ENCODE measurements at regions of chr1 and their contacts with region 1.

Region 1: DNA sequence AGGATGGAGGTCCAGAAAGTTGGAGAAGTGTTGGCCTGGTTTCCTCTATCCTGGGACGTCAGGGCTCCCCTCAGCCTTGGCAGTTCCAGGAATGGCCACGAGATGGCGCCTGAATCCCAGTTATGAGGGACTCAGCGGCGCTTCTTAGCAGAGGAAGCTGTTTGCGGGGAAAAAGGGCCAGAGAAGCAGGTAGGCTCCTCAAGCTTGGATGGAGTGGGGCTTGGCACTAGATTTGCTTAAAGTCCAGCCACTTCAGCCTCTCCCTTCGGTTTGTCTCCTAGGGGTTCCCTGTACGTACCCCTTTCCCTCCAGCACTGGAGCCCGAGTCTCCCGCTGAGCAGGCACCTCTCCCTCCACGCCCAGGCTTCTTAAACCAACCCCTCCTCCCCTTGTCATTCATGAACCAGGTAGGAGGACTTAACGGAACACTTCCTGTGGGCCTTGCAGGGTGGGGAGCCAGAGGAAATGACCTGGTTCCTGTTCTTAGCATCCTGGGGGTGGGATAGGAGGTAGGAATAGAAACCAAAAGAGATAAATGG is 32.0 kb upstream of the TENT5B start:
- DNase-seq: peak; percentile 82
- H3K4me3 ChIP-seq: no peak overlapping the region; a peak in 1 of 4 replicates
- H3K27ac ChIP-seq: no peak overlapping the region
- H3K4me1 ChIP-seq: no peaks in the 10 kb centered on the region
- H3K27me3 ChIP-seq: no peaks in the 10 kb centered on the region
- CTCF ChIP-seq: peak; percentile 95
- EP300 ChIP-seq: no peak
- RAD21 ChIP-seq: peak; percentile 96

Region 2: DNA sequence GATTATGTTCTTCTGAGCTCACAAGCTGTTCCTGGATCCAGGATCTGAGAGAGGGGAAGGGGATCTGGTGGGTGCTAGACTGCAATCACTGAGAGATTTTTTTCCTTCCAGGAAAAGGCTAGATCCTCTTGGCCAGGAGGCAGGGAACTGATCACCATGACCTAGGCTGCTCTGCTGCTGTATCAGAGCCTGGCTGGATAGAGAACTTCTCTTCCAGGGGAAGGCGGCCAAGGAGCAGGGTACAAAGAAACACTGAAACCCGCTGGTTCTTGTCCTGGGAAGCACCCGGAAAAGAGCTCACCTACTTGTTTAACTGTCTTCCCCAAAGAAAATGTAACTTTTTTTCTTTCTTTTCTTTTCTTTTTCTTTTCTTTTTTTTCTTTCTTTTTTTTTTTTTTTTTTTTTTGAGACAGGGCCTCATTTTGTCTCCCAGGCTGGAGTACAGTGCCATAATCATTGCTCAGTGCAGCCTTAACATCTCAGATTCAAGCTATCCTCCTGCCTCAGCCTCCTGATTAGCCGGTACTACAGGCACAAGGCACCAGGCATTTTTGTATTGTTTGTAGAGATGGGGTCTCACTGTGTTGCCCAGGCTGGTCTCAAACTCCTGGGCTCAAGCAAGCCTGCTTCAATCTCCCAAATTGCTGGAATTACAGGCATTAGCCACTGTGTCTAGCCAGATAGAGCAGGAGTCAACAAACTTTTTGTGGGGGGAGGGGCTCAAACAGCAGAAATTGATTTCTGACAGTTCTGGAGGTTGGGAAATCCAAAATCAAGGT is 527.5 kb before region 1 on chr1:
- CTCF ChIA-PET with region 1: no interaction called
- POLR2A ChIA-PET with region 1: no interaction called
- DNase-seq: no peak
- H3K4me3 ChIP-seq: no peak overlapping the region
- H3K27ac ChIP-seq: no peak overlapping the region
- H3K4me1 ChIP-seq: no peaks in the 10 kb centered on the region
- H3K27me3 ChIP-seq: no peaks in the 10 kb centered on the region; the same call in 1 of the 2 replicates
- CTCF ChIP-seq: no peak
- EP300 ChIP-seq: no peak
- RAD21 ChIP-seq: no peak

Region 3: GRCh38 chr1:26761217-26761616 is 283.5 kb before region 1 on chr1:
- CTCF ChIA-PET with region 1: no interaction called
- POLR2A ChIA-PET with region 1: no interaction called
- DNase-seq: peak; percentile 31
- H3K4me3 ChIP-seq: no peak overlapping the region
- H3K27ac ChIP-seq: no peak overlapping the region
- H3K4me1 ChIP-seq: no peaks in the 10 kb centered on the region; a peak in 1 of 4 replicates
- H3K27me3 ChIP-seq: no peaks in the 10 kb centered on the region
- CTCF ChIP-seq: peak; percentile 34
- EP300 ChIP-seq: no peak
- RAD21 ChIP-seq: peak; percentile 33; the same call in 1 of the 2 replicates

Region 4: GRCh38 chr1:26961826-26962225 is 82.9 kb before region 1 on chr1:
- CTCF ChIA-PET with region 1: interaction called, 12 read pairs
- POLR2A ChIA-PET with region 1: no interaction called
- DNase-seq: no peak
- H3K4me3 ChIP-seq: no peak overlapping the region
- H3K27ac ChIP-seq: no peak overlapping the region
- H3K4me1 ChIP-seq: peaks cover 3 to 7% of the 10 kb centered on the region in 2 experiments; a peak in 1 of 4 replicates
- H3K27me3 ChIP-seq: peaks cover 41% of the 10 kb centered on the region
- CTCF ChIP-seq: no peak
- EP300 ChIP-seq: no peak
- RAD21 ChIP-seq: no peak

Region 5: DNA sequence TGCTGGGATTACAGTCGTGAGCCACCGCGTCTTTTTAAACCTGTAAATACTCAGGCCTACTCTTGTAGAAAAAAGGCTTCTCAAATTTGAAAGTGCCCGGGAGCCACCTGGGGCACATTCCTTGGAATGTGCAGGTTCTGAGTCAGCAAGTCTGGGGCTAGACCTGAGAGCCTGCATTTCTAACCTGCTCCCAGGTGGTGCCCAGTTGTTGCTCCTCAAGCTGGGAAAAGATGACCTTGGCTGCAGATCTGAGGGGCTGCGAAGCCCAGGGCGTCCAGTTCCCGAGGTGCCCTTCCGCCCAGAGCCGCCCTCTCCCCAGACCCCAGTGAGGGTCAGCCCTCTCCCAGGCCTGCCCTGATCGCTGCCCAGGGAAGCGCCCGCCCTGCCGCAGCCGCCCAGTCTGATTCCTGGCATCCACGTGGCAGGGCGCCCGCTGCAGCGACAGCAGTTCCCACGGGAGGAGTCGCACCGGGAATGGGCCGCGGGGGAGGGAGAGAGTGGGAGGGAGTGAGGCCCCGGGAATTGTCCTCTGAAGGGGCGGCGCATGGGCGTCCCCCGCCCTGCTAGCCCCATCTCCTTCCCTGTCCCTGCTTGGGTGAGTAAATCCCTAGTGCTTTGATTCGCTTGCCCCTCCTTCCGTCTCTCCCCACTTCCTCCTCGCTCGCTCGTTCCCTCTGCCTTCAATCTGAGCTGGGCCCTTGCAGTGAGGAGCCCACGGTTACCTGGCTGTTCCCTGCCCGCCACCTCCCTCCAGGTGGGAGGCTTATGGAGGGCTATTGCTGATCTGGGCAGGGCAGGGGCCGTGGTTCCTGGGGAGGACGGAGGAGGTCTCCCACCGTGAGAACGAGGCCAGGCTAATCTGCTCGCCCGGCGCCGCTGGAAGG is 13.2 kb before region 1 on chr1:
- CTCF ChIA-PET with region 1: interaction called, 123 read pairs
- POLR2A ChIA-PET with region 1: no interaction called
- DNase-seq: peak; percentile 38
- H3K4me3 ChIP-seq: no peak overlapping the region
- H3K27ac ChIP-seq: no peak overlapping the region
- H3K4me1 ChIP-seq: peaks cover 0 to under 1% of the 10 kb centered on the region in 2 experiments; a peak in 1 of 4 replicates
- H3K27me3 ChIP-seq: no peaks in the 10 kb centered on the region
- CTCF ChIP-seq: no peak
- EP300 ChIP-seq: no peak
- RAD21 ChIP-seq: no peak

Region 6: GRCh38 chr1:27077968-27078367 is 33.3 kb after region 1 on chr1:
- CTCF ChIA-PET with region 1: interaction called, 1,084 read pairs
- POLR2A ChIA-PET with region 1: no interaction called
- DNase-seq: no peak
- H3K4me3 ChIP-seq: no peak overlapping the region
- H3K27ac ChIP-seq: no peak overlapping the region
- H3K4me1 ChIP-seq: no peaks in the 10 kb centered on the region
- H3K27me3 ChIP-seq: no peaks in the 10 kb centered on the region
- CTCF ChIP-seq: no peak
- EP300 ChIP-seq: no peak
- RAD21 ChIP-seq: no peak

Region 7: DNA sequence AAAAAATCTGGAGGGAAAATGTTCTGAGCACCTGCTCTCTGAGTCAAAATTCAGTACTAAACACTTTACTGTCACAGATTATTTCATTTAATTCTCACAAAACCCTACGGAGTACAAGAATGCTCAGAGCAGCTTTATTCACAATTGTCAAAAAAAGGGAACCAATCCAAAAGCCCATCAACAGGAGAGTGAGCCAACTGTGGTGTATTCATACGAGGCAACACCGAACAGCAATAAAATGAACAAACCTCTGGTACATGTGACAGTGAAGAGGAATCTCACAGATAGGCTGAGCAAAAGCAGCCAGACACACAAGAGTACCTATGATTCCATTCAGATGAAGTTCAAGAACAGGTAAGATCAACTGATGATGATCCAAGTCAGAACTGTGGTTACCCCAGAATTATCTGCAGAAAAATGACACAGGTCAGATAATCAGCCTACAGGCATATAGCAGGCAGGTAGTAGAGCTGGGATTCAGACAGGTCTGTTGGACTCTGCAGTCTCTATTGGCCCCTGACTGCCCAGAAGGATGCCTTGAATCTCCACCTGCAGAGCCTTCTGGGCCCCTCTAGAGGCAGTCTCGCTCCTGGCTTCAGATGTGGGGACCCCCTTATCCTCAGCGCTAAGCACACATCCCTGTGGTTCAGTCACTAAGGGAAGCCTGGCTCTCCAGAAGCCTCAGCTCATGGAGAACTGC is 91.0 kb after region 1 on chr1:
- CTCF ChIA-PET with region 1: interaction called, 15 read pairs
- POLR2A ChIA-PET with region 1: no interaction called
- DNase-seq: no peak
- H3K4me3 ChIP-seq: no peak overlapping the region
- H3K27ac ChIP-seq: no peak overlapping the region
- H3K4me1 ChIP-seq: peaks cover 4 to 31% of the 10 kb centered on the region in 2 experiments; a peak in 1 of 4 replicates
- H3K27me3 ChIP-seq: no peaks in the 10 kb centered on the region
- CTCF ChIP-seq: peak; percentile 22
- EP300 ChIP-seq: no peak
- RAD21 ChIP-seq: 0 out of 2 replicates have a peak, but pooled peaks have one; percentile 11

Region 8: GRCh38 chr1:27257155-27257554 is 212.5 kb after region 1 on chr1:
- CTCF ChIA-PET with region 1: interaction called, 18 read pairs
- POLR2A ChIA-PET with region 1: no interaction called
- DNase-seq: no peak
- H3K4me3 ChIP-seq: no peak overlapping the region
- H3K27ac ChIP-seq: no peak overlapping the region
- H3K4me1 ChIP-seq: no peaks in the 10 kb centered on the region
- H3K27me3 ChIP-seq: no peaks in the 10 kb centered on the region
- CTCF ChIP-seq: no peak
- EP300 ChIP-seq: no peak
- RAD21 ChIP-seq: no peak

Measured in SK-N-SH (cell line).